IMR-90 (cell line): ENCODE measurements at regions of chr22 and their contacts with region 1.

Region 1: GRCh38 chr22:31630331-31631329 is 31.4 kb downstream of the PISD start:
- DNase-seq: peak; percentile 74
- ATAC-seq: peak; percentile 92
- H3K4me3 ChIP-seq: peak overlapping the region; percentile 69
- H3K27ac ChIP-seq: peak overlapping the region; percentile 78
- H3K4me1 ChIP-seq: peaks cover 25% of the 10 kb centered on the region
- H3K27me3 ChIP-seq: no peaks in the 10 kb centered on the region
- CTCF ChIP-seq: no peak
- POLR2A ChIP-seq: peak; percentile 81
- RAD21 ChIP-seq: no peak

Region 2: DNA sequence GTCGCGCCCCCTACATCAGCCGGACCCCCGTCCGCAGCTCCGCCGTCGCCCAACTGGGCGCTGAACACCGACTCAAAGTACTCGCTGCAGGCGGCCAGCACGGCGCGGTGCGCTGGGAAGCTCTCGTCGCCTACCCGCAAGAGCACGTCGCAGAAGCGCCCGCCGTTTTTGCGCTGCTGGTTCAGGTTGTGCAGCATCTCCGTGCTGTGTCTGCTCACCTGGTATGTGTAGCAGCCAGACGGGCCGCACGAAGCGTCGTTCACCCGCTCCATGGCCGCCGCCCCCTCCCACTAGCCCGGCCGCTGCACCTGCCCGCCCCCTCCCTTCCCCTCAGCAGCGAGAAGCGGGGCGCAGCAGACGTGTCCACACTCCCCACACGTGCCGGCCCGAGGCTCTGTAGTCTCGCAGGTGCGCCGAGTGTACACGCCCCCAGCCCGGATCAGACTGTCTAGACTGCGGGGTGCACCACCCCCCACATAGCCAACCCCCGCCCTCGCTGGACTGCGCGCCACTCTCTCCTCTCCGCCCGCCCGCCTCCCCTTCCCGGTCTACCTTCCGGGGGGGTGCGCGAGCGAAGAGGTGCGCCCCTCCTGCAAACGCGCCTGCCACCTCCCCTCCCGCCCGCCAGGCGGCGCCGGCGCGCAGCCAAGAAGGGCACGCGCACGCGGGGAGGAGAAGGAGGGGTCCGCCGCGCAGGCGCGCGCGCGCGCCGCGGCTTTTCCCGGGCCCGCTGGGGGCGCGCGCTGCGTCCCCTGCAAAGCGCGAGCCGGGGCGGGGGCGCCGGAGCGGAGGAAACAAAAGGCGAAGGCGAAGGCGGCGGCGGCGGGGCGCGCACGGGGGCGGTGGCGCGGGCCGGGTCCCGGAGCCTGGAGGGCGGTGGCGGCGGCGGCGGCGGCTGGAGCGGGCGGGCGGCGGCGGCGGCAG is 285.0 kb before region 1 on chr22:
- CTCF ChIA-PET with region 1: no interaction called
- POLR2A ChIA-PET with region 1: no interaction called
- dilution Hi-C with region 1: no loop called
- in situ Hi-C with region 1: no loop called
- intact Hi-C with region 1: loop called (anchors 5 kb)
- DNase-seq: peak; percentile 83
- ATAC-seq: peak; percentile 52
- H3K4me3 ChIP-seq: peak overlapping the region; percentile 56
- H3K27ac ChIP-seq: peak overlapping the region; percentile 74
- H3K4me1 ChIP-seq: peaks cover 27% of the 10 kb centered on the region
- H3K27me3 ChIP-seq: no peaks in the 10 kb centered on the region
- CTCF ChIP-seq: peak; percentile 86
- POLR2A ChIP-seq: peak; percentile 37; the same call in 1 of the 2 replicates
- RAD21 ChIP-seq: peak; percentile 51

Region 3: GRCh38 chr22:31451709-31452571 is 178.7 kb before region 1 on chr22:
- CTCF ChIA-PET with region 1: interaction called, 4 read pairs
- POLR2A ChIA-PET with region 1: no interaction called
- dilution Hi-C with region 1: no loop called
- in situ Hi-C with region 1: no loop called
- intact Hi-C with region 1: loop called (anchors 1 kb)
- DNase-seq: peak; percentile 59
- ATAC-seq: peak; percentile 82
- H3K4me3 ChIP-seq: no peak overlapping the region
- H3K27ac ChIP-seq: no peak overlapping the region
- H3K4me1 ChIP-seq: no peaks in the 10 kb centered on the region
- H3K27me3 ChIP-seq: no peaks in the 10 kb centered on the region
- CTCF ChIP-seq: peak; percentile 58
- POLR2A ChIP-seq: no peak
- RAD21 ChIP-seq: peak; percentile 44

Region 4: DNA sequence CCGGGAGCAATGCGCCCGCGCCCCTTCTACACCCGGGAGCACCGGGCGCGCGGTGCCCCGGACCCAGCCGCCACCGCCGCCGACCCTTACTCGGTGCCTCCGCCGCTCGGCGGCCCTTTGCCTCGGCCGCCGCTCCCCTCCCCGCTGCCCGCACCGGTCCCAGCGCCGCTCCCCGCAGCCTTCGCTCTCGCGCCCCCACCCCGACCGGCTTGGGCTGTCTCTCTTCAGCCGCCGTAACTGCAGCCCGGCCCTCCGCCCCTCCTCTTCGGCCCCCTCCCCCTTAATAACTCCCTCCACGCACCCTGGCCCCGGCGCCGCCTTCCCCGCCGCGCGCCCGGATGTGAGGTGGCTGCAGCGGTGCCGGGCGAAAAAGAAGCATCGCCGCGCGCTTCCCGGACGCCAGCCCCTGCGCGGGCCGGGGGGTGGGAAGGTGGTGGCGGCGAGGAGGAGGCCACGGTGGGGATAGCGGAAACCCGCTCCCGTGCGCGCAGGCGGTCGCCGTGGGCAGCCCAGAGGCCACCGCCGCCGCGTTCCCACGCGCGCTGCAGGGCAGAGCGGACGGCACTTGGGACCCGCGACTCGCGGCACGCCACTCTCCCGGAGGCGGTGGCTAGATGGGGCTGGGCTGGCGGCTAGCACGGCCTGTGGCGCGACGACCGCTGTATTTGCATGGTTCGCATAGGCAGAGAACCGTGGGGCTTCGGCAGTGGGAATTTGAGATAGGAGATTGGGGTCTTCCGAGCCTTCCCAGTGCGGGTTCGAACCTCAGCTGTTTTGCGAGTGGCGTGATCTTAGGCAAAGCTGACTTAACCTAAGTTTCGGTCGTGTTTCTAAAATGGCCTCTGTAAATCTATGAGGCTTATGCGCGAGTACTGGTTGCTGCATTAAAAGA is 140.8 kb before region 1 on chr22 and contains the start of gene EIF4ENIF1:
- CTCF ChIA-PET with region 1: no interaction called
- POLR2A ChIA-PET with region 1: no interaction called
- dilution Hi-C with region 1: no loop called
- in situ Hi-C with region 1: no loop called
- intact Hi-C with region 1: loop called (anchors 1 kb)
- DNase-seq: peak; percentile 78
- ATAC-seq: peak; percentile 94
- H3K4me3 ChIP-seq: peak within 1 kb of the TSS; percentile 72
- H3K27ac ChIP-seq: peak within 1 kb of the TSS; percentile 98
- H3K4me1 ChIP-seq: peaks cover 2% of the 10 kb centered on the region; the same call in 1 of the 2 replicates
- H3K27me3 ChIP-seq: no peaks in the 10 kb centered on the region
- CTCF ChIP-seq: no peak
- POLR2A ChIP-seq: no peak; the same call in 1 of the 2 replicates
- RAD21 ChIP-seq: no peak
- total RNA-seq, gene EIF4ENIF1: 14.7 and 16.4 TPM in 2 replicates

Region 5: GRCh38 chr22:31496007-31496734 is 134.5 kb before region 1 on chr22 and contains the start of gene SFI1:
- CTCF ChIA-PET with region 1: no interaction called
- POLR2A ChIA-PET with region 1: no interaction called
- dilution Hi-C with region 1: no loop called
- in situ Hi-C with region 1: no loop called
- intact Hi-C with region 1: loop called (anchors 2 kb)
- DNase-seq: peak; percentile 87
- ATAC-seq: peak; percentile 98
- H3K4me3 ChIP-seq: peak within 1 kb of the TSS; percentile 77
- H3K27ac ChIP-seq: peak within 1 kb of the TSS; percentile 80
- H3K4me1 ChIP-seq: no peaks in the 10 kb centered on the region
- H3K27me3 ChIP-seq: no peaks in the 10 kb centered on the region
- CTCF ChIP-seq: peak; percentile 27
- POLR2A ChIP-seq: no peak; the same call in 1 of the 2 replicates
- RAD21 ChIP-seq: no peak
- total RNA-seq, gene SFI1: 8.9 and 9.9 TPM in 2 replicates

Region 6: GRCh38 chr22:31561238-31561887 is 69.3 kb before region 1 on chr22:
- CTCF ChIA-PET with region 1: interaction called, 6 read pairs
- POLR2A ChIA-PET with region 1: no interaction called
- dilution Hi-C with region 1: no loop called
- in situ Hi-C with region 1: loop called (anchors 5 kb)
- intact Hi-C with region 1: loop called (anchors 1 kb)
- DNase-seq: peak; percentile 77
- ATAC-seq: peak; percentile 100
- H3K4me3 ChIP-seq: no peak overlapping the region
- H3K27ac ChIP-seq: no peak overlapping the region
- H3K4me1 ChIP-seq: no peaks in the 10 kb centered on the region; the same call in 1 of the 2 replicates
- H3K27me3 ChIP-seq: no peaks in the 10 kb centered on the region
- CTCF ChIP-seq: peak; percentile 86
- POLR2A ChIP-seq: 0 out of 2 replicates have a peak, but pooled peaks have one; percentile 20
- RAD21 ChIP-seq: peak; percentile 85

Region 7: DNA sequence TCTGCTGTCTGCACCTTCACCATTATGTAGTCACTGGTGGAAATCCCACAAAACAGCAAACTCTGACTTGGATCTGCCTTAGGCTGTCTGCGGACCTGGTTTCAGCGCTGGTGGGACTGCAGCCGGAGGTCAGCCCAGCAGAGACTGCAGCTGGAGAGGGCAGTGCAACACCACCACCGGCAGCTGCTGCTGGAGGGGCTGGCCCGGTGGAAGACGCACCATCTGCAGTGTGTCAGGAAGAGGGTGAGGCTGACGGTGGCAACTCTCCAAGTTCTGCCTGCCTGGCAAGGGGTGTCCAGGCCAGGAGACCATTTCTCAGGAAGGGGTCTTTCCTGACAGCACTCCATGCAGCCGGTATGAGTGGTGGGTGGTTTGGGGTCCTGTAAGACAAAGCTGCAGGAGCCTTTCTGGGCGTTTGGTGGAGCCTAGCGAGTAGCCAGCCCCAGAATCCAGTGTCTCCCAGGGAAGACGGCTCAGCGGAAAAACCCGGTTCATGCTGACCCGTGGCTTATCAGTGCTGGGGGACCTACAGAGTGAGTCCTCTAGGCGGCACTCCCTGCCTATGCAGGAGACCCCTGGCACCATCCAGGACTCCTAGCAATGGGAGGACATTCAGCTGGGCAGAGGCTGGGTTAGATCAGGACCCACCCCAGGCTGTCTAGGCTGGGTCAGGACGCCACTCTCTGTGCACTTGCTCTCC is 19.4 kb before region 1 on chr22:
- CTCF ChIA-PET with region 1: no interaction called
- POLR2A ChIA-PET with region 1: no interaction called
- dilution Hi-C with region 1: no loop called
- in situ Hi-C with region 1: no loop called
- intact Hi-C with region 1: no loop called
- DNase-seq: peak; percentile 50
- ATAC-seq: peak; percentile 81
- H3K4me3 ChIP-seq: no peak overlapping the region
- H3K27ac ChIP-seq: no peak overlapping the region
- H3K4me1 ChIP-seq: peaks cover 9% of the 10 kb centered on the region
- H3K27me3 ChIP-seq: no peaks in the 10 kb centered on the region
- CTCF ChIP-seq: no peak
- POLR2A ChIP-seq: no peak
- RAD21 ChIP-seq: no peak